ENCODE measurements at regions of chr20 and their contacts with region 1.

Region 1: GRCh38 chr20:63657937-63658748 is at the start of gene RTEL1:
- DNase-seq: peak; percentile 88 to 99 (median 92)

Region 2: DNA sequence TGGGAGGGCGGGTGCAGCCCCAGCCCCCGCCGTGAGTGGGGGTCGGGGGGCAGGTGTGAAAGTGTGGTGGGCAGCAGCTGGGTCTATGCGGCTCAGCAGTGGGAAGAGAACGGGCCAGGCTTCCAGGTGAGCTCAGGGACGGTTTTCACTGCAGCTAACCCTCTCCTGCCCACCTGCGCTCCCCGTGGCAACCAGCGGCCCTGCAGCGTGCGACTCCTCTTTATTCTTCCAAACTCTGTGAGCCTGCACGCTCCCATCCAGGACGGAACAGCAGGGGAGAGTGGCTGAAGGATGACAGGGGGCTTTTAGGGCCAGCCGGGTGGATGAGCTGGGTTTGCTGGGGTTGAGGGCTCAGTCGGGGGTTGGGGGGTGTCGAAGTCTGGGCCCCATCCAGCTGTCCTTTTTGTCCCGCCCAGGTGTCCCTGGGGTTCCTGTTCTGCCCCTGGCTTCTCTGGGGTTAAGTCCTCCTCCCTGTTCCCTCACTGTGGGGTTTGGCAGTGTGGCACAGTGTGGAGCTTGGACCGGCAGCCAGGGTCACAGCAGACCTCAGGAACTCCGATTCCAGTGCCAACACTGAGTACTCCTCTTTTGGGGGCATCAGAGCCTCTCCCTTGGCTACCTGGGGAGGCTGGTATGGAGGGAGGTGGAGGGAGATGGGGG is 423.3 kb before region 1 on chr20:
- intact Hi-C with region 1: no loop called
- DNase-seq: peak in 2 of 10 donors; percentile 21 to 34

Region 3: GRCh38 chr20:63707549-63708300 is 49.6 kb after region 1 on chr20 and contains the starts of genes ARFRP1 and ZGPAT:
- intact Hi-C with region 1: loop called (anchors 1 kb)
- DNase-seq: peak; percentile 89 to 99 (median 94)